ENCODE measurements at regions of chr14 and their contacts with region 1.

Region 1: DNA sequence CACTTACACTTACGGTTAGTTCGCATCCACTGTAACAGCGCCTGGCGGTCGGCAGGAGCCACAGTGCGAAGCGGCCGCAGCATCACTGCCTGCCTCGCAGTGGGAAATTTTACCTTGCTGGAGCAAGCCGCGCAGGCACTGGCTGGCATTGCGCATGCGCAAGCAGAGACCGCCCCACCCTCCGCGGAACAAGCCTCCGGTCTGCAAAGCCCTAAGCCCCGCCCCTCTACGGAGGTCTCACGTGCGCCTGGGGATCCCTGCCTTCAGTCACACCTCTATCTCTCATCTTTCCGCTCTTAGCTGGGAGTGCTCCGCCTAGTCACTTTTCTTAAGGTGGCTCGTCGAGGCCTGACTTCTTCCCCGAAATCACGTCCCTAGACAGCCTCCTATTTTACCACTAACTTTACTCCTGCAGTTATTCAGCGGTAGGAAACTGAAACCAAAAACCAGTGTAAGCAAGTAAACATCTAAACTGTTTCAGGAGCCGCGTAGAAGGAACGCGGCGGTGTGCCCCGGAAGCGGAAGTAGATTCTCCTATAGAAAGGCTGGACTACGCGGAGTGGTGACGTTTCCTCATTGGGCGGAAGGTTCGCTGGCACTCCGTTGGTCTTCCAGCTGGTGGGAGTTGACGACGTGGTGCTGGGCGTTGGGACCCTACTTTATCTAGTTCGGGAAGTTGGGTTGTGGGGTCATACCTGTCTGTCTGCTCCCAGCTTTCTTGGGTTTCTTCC is at the start of gene SRP54:
- DNase-seq: peak; percentile 100
- H3K4me3 Mint-ChIP-seq: no peak within 1 kb of the TSS
- H3K27ac Mint-ChIP-seq: no peak within 1 kb of the TSS
- H3K4me1 Mint-ChIP-seq: peaks cover 20% of the 10 kb centered on the region
- H3K27me3 Mint-ChIP-seq: no peaks in the 10 kb centered on the region
- total RNA-seq, gene SRP54: 78.9 and 82.4 TPM in 2 replicates

Region 2: DNA sequence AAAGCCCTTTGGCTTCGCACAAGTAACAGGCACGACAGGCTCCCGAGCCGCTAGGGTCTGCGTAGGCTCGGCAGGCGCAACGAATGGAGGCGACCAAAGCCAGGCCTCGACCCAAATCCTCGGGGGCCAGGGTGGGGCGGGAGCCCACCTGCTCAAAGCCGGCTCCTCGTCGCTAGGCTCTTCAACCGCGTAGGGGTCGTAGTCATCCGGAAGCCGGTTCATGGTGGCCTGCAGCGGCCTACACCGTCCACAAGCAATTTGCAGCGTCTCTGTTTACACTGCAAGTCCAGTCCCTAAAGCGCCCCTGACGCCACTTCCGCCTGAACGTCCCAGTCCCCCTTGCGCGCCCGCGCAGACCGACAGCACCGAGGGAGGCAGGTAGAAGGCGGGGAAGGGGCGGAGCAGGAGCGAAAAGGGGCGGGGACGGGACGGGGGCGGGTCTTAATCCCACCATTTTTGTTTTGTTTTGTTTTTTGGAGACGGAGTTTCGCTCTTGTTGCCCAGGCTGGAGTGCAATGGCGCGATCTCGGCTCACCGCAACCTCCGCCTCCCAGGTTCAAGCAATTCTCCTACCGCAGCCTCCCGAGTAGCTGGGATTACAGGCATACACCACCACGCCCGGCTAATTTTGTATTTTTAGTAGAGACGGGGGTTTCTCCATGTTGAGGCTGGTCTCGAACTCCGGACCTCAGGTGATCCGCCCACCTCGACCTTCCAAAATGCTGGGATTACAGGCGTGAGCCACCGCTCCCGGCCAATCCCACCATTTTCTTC is 443.0 kb before region 1 on chr14 and contains the start of gene EAPP:
- intact Hi-C with region 1: loop called (anchors 5 kb)
- DNase-seq: peak; percentile 92
- H3K4me3 Mint-ChIP-seq: peak within 1 kb of the TSS; percentile 99
- H3K27ac Mint-ChIP-seq: peak within 1 kb of the TSS; percentile 99
- H3K4me1 Mint-ChIP-seq: peaks cover 24% of the 10 kb centered on the region
- H3K27me3 Mint-ChIP-seq: no peaks in the 10 kb centered on the region
- total RNA-seq, gene EAPP: 35.2 and 36.6 TPM in 2 replicates

Region 3: DNA sequence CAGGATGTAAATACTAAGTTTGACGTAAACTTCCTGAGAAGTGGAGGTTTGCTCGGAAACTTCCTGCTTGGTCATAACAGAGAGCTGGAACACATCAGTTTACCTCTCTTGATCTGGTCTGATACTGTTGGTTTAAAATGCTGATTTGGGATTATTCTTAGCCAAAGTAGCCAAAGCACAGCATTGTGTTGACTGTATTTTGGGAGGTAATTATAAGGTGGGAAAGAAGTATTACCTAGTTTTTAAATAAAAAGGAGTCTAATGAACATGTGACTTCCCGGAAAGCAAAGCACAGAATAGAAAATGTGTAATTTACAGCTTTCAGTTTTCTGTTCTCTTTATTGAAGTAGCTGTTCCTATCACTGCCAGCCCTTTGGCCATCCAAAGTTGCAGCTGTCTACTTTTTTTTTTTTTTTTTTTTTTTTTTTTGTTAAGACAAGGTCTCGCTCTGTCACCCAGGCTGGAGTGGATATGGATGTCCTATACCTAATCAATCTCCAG is 51.9 kb before region 1 on chr14:
- intact Hi-C with region 1: loop called (anchors 1 kb)
- DNase-seq: no peak
- H3K4me3 Mint-ChIP-seq: peak overlapping the region; percentile 59
- H3K27ac Mint-ChIP-seq: peak overlapping the region; percentile 94
- H3K4me1 Mint-ChIP-seq: peaks cover 35% of the 10 kb centered on the region
- H3K27me3 Mint-ChIP-seq: no peaks in the 10 kb centered on the region

Region 4: GRCh38 chr14:35046048-35046741 is 63.6 kb after region 1 on chr14 and contains the start of gene FAM177A1:
- intact Hi-C with region 1: loop called (anchors 1 kb)
- DNase-seq: peak; percentile 97
- H3K4me3 Mint-ChIP-seq: peak within 1 kb of the TSS; percentile 98
- H3K27ac Mint-ChIP-seq: peak within 1 kb of the TSS; percentile 98
- H3K4me1 Mint-ChIP-seq: peaks cover 21% of the 10 kb centered on the region
- H3K27me3 Mint-ChIP-seq: no peaks in the 10 kb centered on the region
- total RNA-seq, gene FAM177A1: 41.3 and 43.2 TPM in 2 replicates

Region 5: DNA sequence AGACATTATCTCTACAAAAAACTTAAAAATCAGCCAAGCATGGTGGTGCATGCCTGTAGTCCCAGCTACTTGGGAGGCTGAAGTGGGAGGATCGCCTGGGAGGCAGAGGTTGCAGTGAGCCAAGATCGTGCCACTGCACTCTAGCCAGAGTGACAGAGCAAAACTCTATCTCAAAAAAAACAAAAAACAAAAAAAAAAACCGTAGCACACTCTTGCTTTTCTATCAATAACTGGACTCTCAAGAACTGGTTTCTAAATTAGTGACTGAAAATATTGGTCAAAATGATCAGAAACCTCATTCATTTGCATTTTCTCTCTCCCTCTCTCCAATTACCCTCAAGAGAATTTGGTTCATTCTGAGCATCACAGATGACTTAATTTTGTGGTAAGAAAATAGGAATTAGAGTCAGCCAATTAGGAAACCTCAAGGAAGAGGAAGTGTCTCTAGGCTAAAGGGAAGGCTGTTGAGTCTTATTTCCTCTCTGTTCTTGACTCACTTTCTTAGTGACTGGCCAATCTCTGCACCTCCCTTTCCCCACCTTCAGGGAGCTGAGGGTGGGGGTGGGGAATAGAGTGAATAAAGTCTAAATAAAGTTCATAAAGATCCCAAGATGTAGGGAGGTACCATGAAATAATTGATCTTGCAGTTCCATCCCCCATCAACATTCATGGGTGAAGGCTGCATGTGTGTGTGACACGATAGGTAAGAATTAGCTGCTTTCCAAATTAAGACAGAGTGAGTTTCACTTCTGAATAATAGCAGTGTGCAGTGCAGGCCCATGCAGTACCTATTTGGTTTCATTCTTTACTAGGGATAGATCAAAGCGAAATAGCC is 302.8 kb after region 1 on chr14:
- intact Hi-C with region 1: loop called (anchors 2 kb)
- DNase-seq: no peak
- H3K4me3 Mint-ChIP-seq: peak overlapping the region; percentile 55
- H3K27ac Mint-ChIP-seq: peak overlapping the region; percentile 82
- H3K4me1 Mint-ChIP-seq: peaks cover 41% of the 10 kb centered on the region
- H3K27me3 Mint-ChIP-seq: no peaks in the 10 kb centered on the region